ENCODE measurements at regions of chr17 and their contacts with region 1.

Region 1: GRCh38 chr17:60599620-60600489 is at the start of gene PPM1D:
- DNase-seq: peak; percentile 96 to 98 (median 97)
- H3K4me3 ChIP-seq: peak within 1 kb of the TSS; percentile 90
- H3K4me3 Mint-ChIP-seq: peak within 1 kb of the TSS; percentile 89 to 99 (median 97)
- H3K27ac ChIP-seq: peak within 1 kb of the TSS; percentile 93
- H3K27ac Mint-ChIP-seq: peak within 1 kb of the TSS; percentile 92 to 99 (median 96)
- H3K4me1 ChIP-seq: peaks cover 22% of the 10 kb centered on the region
- H3K4me1 Mint-ChIP-seq: peaks cover 43 to 52% (median 50%) of the 10 kb centered on the region in 3 donors
- H3K27me3 ChIP-seq: no peaks in the 10 kb centered on the region
- H3K27me3 Mint-ChIP-seq: no peaks in the 10 kb centered on the region
- total RNA-seq, gene PPM1D: 17.8 to 19.0 TPM

Region 2: DNA sequence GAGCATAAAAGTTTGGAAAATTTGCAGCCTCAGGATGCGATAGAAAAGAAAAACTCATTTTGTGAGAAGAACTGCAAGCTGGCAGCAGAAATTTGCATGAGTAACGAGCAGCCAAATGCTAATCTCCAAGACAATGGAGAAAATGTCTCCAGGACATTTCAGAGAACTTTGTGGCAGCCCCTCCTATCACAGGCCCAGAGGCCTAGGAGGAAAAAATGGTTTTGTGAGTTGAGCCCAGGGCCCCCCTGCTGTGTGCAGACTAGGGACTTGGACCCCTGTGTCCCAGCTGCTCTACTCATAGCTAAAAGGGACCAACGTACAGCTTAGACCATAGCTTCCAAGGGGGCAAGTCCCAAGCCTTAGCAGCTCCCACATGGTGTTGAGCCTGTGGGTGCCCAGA is 108.1 kb before region 1 on chr17:
- CTCF ChIA-PET with region 1: no interaction called
- POLR2A ChIA-PET with region 1: no interaction called
- DNase-seq: no peak
- H3K4me3 ChIP-seq: no peak overlapping the region
- H3K4me3 Mint-ChIP-seq: no peak overlapping the region
- H3K27ac ChIP-seq: no peak overlapping the region
- H3K27ac Mint-ChIP-seq: no peak overlapping the region
- H3K4me1 ChIP-seq: no peaks in the 10 kb centered on the region
- H3K4me1 Mint-ChIP-seq: peaks cover 0 to 5% (median 4%) of the 10 kb centered on the region in 3 donors
- H3K27me3 ChIP-seq: no peaks in the 10 kb centered on the region
- H3K27me3 Mint-ChIP-seq: no peaks in the 10 kb centered on the region

Region 3: GRCh38 chr17:60545465-60546454 is 54.1 kb before region 1 on chr17:
- CTCF ChIA-PET with region 1: no interaction called
- POLR2A ChIA-PET with region 1: no interaction called
- DNase-seq: no peak
- H3K4me3 ChIP-seq: no peak overlapping the region
- H3K4me3 Mint-ChIP-seq: no peak overlapping the region
- H3K27ac ChIP-seq: no peak overlapping the region
- H3K27ac Mint-ChIP-seq: no peak overlapping the region
- H3K4me1 ChIP-seq: no peaks in the 10 kb centered on the region
- H3K4me1 Mint-ChIP-seq: no peaks in the 10 kb centered on the region
- H3K27me3 ChIP-seq: no peaks in the 10 kb centered on the region
- H3K27me3 Mint-ChIP-seq: no peaks in the 10 kb centered on the region

Region 4: DNA sequence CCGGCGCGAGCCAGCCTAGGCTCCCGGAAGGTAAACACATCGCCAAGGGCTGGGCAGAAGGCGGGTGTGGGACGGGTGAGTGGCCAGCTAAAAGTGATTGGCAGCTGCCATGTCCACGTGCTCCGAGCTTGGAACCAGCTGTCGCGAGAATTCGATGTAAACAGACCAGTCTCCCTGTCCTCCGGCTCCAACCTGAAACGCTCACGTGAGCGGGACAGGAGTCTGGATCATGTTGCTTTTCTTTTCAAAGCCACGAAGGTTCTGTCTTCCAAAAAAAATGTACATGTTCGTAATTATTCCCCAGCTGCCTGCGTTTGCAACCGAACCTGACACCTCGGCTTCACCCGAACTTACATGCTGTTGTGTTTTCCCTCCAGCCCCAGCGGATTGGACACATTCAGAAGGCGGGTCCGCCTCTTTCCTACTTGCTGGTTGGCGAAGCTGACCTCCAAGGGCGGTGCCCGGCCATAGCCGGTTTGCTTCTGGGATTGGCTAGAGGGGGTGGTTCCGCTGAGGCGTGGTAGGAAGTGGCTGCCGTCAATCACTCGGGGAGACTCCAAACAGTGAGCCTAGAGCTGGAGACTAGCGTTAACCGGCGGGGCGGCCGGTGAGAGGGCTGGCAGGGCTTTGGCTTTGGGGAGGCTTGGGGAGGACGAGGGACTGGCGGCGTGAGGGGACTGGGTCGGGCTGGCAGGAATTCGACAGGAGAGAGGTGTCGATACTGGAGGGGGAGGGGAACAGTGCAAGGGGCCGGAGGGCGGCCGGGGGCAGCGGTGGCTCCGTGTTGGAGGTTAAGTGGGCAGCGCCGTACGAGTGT is 77.7 kb after region 1 on chr17 and contains the start of gene BCAS3:
- CTCF ChIA-PET with region 1: interaction called, 3 read pairs
- POLR2A ChIA-PET with region 1: interaction called, 11 read pairs
- DNase-seq: peak; percentile 93 to 97 (median 97)
- H3K4me3 ChIP-seq: peak within 1 kb of the TSS; percentile 92
- H3K4me3 Mint-ChIP-seq: peak within 1 kb of the TSS; percentile 94 to 100 (median 98)
- H3K27ac ChIP-seq: peak within 1 kb of the TSS; percentile 53
- H3K27ac Mint-ChIP-seq: peak within 1 kb of the TSS; percentile 85 to 99 (median 98)
- H3K4me1 ChIP-seq: peaks cover 10% of the 10 kb centered on the region
- H3K4me1 Mint-ChIP-seq: peaks cover 21 to 31% (median 30%) of the 10 kb centered on the region in 3 donors
- H3K27me3 ChIP-seq: no peaks in the 10 kb centered on the region
- H3K27me3 Mint-ChIP-seq: peaks cover 0 to 5% of the 10 kb centered on the region in 2 donors
- total RNA-seq, gene BCAS3: 10.7 to 13.5 TPM

Region 5: DNA sequence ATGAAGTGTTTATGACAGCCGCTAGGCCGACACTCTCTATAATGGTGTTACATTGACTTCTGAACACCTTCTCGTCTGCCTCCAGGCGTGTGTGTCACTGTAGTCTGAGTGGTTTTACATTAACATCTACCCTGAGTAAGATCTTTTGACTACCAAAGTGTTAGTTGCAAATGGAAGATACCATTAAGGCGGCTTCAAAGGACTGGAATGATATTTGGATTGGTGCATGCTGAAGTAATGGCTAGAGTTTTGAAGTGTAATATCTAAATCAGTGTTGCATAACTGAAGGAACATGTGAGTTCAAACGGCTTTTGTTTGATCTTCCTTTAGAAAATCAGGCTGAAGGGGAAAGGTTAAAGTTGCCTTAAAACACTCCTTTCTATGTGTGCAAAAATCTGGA is 130.0 kb after region 1 on chr17:
- CTCF ChIA-PET with region 1: no interaction called
- POLR2A ChIA-PET with region 1: no interaction called
- DNase-seq: no peak
- H3K4me3 ChIP-seq: no peak overlapping the region
- H3K4me3 Mint-ChIP-seq: no peak overlapping the region
- H3K27ac ChIP-seq: no peak overlapping the region
- H3K27ac Mint-ChIP-seq: no peak overlapping the region
- H3K4me1 ChIP-seq: no peaks in the 10 kb centered on the region
- H3K4me1 Mint-ChIP-seq: peaks cover 10 to 17% (median 16%) of the 10 kb centered on the region in 3 donors
- H3K27me3 ChIP-seq: no peaks in the 10 kb centered on the region
- H3K27me3 Mint-ChIP-seq: no peaks in the 10 kb centered on the region